ENCODE measurements at regions of chr13 and their contacts with region 1.

Region 1: GRCh38 chr13:63864171-63864902 is 2448.7 kb upstream of the PCDH20 start:
- DNase-seq: no peak
- H3K4me3 ChIP-seq: no peak overlapping the region
- H3K27ac ChIP-seq: no peak overlapping the region
- H3K4me1 ChIP-seq: no peaks in the 10 kb centered on the region
- H3K27me3 ChIP-seq: no peaks in the 10 kb centered on the region
- CTCF ChIP-seq: no peak
- POLR2A ChIP-seq: no peak

Region 2: GRCh38 chr13:63435668-63436287 is 428.6 kb before region 1 on chr13:
- intact Hi-C with region 1: no loop called
- DNase-seq: no peak
- H3K4me3 ChIP-seq: no peak overlapping the region
- H3K27ac ChIP-seq: no peak overlapping the region
- H3K4me1 ChIP-seq: no peaks in the 10 kb centered on the region
- H3K27me3 ChIP-seq: no peaks in the 10 kb centered on the region
- CTCF ChIP-seq: no peak
- POLR2A ChIP-seq: no peak

Region 3: GRCh38 chr13:64527561-64527960 is 663.2 kb after region 1 on chr13:
- intact Hi-C with region 1: loop called (anchors 5 kb)
- DNase-seq: no peak
- H3K4me3 ChIP-seq: no peak overlapping the region
- H3K27ac ChIP-seq: no peak overlapping the region
- H3K4me1 ChIP-seq: no peaks in the 10 kb centered on the region
- H3K27me3 ChIP-seq: no peaks in the 10 kb centered on the region
- CTCF ChIP-seq: no peak
- POLR2A ChIP-seq: no peak

Measured in breast epithelium (tissue), 4 donors.